Transverse colon (tissue), 4 donors: ENCODE measurements at regions of chr4 and their contacts with region 1.

Region 1: GRCh38 chr4:112266821-112267220 is 18.9 kb downstream of the TIFA start:
- DNase-seq: no peak
- H3K4me3 ChIP-seq: no peak overlapping the region
- H3K27ac ChIP-seq: no peak overlapping the region
- H3K4me1 ChIP-seq: no peaks in the 10 kb centered on the region
- H3K27me3 ChIP-seq: no peaks in the 10 kb centered on the region
- CTCF ChIP-seq: peak in 4 of 5 experiments; percentile 26 to 38 (median 33)
- EP300 ChIP-seq: no peak
- POLR2A ChIP-seq: no peak

Region 2: GRCh38 chr4:111393781-111394180 is 873.0 kb before region 1 on chr4:
- in situ Hi-C with region 1: no loop called
- intact Hi-C with region 1: loop called (anchors 5 kb)
- DNase-seq: no peak
- H3K4me3 ChIP-seq: no peak overlapping the region
- H3K27ac ChIP-seq: no peak overlapping the region
- H3K4me1 ChIP-seq: peaks cover 0 to 2% (median 0%) of the 10 kb centered on the region in 4 donors
- H3K27me3 ChIP-seq: no peaks in the 10 kb centered on the region
- CTCF ChIP-seq: no peak
- EP300 ChIP-seq: no peak
- POLR2A ChIP-seq: no peak

Region 3: GRCh38 chr4:111806331-111806730 is 460.5 kb before region 1 on chr4:
- in situ Hi-C with region 1: no loop called
- intact Hi-C with region 1: no loop called
- DNase-seq: no peak
- H3K4me3 ChIP-seq: no peak overlapping the region
- H3K27ac ChIP-seq: no peak overlapping the region
- H3K4me1 ChIP-seq: no peaks in the 10 kb centered on the region
- H3K27me3 ChIP-seq: no peaks in the 10 kb centered on the region
- CTCF ChIP-seq: peak in 1 of 5 experiments; percentile 7
- EP300 ChIP-seq: no peak
- POLR2A ChIP-seq: no peak